PC-9 (cell line): ENCODE measurements at regions of chr16 and their contacts with region 1.

Region 1: DNA sequence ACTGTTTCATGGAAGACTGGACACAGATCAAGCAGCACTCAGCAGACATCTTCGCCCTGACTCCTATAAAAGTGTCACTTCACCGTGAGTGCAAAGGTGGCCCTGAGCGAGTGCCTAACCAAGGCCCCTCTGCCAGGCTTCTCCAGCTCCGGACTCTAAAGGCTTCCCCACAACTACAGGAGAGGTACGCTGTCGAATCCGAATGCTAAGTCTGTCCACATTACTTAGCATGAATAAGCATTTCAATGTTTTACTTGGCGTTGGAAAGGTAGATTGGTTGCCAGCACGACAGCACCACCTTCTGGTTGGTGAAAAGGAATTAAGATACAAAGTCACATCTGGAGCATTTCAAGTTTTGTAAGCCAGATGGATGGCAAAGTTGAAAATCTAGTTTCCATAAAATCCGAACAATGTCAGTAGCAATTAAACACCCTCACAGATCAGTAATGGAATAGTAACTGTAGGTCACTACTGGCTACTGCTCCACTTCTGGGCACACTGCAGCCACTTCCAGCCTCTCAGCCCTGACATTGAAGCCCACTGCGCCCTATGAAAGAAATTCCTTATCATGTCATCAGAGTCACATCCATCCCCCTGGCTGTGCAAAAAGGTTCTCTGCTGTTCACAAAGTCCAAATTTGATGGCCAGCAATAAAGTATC is 100.9 kb downstream of the PARN start:
- DNase-seq: peak; percentile 86
- H3K4me3 ChIP-seq: no peak overlapping the region
- H3K27ac ChIP-seq: peak overlapping the region; percentile 70
- H3K4me1 ChIP-seq: peaks cover 31% of the 10 kb centered on the region
- H3K27me3 ChIP-seq: no peaks in the 10 kb centered on the region
- CTCF ChIP-seq: peak; percentile 87

Region 2: GRCh38 chr16:14249291-14250032 is 279.7 kb before region 1 on chr16:
- CTCF ChIA-PET with region 1: no interaction called
- POLR2A ChIA-PET with region 1: no interaction called
- intact Hi-C with region 1: loop called (anchors 1 kb)
- DNase-seq: peak in 1 of 2 experiments; percentile 55
- H3K4me3 ChIP-seq: no peak overlapping the region
- H3K27ac ChIP-seq: no peak overlapping the region
- H3K4me1 ChIP-seq: no peaks in the 10 kb centered on the region
- H3K27me3 ChIP-seq: no peaks in the 10 kb centered on the region
- CTCF ChIP-seq: peak; percentile 88

Region 3: DNA sequence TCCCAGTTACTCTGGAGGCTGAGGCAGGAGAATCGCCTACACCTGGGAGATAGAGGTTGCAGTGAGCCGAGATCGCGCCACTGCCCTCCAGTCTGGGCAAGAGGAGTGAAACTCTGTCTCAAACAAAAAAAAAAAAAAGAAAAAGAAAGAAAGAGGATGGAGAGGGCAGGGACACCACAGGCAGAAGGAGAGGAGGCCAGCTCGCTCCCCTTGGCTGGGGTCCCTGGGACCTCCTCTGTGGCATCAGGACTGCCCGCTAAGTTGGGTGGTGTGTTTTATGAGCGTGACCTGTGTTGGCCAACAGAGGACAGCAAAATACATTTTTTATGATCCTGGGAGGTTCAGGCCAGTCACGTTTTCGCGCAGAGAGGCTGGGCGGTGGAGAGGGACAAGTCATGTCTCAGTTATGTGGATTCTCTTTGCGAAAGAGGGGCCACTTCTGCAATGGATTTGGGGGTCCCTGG is 228.4 kb before region 1 on chr16:
- CTCF ChIA-PET with region 1: interaction called, 3 read pairs
- POLR2A ChIA-PET with region 1: no interaction called
- intact Hi-C with region 1: loop called (anchors 1 kb)
- DNase-seq: peak; percentile 83 to 84
- H3K4me3 ChIP-seq: peak overlapping the region; percentile 73; the same call in 1 of the 2 replicates
- H3K27ac ChIP-seq: peak overlapping the region; percentile 83
- H3K4me1 ChIP-seq: peaks cover 8% of the 10 kb centered on the region
- H3K27me3 ChIP-seq: no peaks in the 10 kb centered on the region
- CTCF ChIP-seq: peak; percentile 68

Region 4: DNA sequence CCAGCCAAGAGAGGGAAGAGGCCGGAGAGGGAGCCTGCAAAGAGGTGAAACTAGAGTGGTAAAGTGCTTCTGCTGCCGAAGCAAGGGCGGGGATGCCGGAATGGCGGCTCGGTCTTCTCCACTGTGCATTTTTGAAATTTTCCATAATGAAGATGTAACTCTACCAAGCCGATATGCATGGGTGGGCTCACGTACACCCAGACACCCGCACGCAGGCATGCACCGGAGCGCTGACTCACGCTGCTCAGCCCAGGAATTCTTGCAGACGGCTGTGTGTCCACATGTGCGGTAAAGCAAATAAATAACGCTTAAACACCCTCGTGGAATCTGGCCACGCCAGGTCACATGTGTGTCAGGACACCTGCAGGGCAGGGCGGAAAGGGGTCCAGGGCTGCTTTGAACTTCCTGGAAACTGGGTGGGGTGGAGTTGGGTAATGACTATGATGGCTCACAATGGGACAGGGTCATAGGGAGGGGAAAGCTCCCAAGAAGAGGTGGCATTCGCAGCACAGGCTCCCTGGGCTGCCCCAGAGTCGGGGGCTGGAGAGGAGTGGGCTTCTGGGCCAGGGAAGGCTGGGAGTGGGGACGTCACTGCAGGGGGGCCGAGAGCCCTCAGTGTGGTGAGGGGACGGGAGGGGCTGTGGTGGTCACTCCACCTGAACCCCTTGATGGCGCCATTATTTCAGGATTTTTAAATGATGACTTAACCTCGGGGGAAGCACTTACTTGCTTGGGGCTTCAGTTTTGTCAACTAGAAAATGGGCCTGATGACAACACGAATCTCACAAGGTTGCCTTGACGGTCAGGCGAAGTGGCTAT is 164.5 kb before region 1 on chr16:
- CTCF ChIA-PET with region 1: interaction called, 3 read pairs
- POLR2A ChIA-PET with region 1: interaction called, 11 read pairs
- intact Hi-C with region 1: loop called (anchors 1 kb)
- DNase-seq: peak; percentile 98 to 99
- H3K4me3 ChIP-seq: peak overlapping the region; percentile 49; the same call in 1 of the 2 replicates
- H3K27ac ChIP-seq: peak overlapping the region; percentile 98
- H3K4me1 ChIP-seq: peaks cover 32% of the 10 kb centered on the region
- H3K27me3 ChIP-seq: no peaks in the 10 kb centered on the region
- CTCF ChIP-seq: no peak

Region 5: DNA sequence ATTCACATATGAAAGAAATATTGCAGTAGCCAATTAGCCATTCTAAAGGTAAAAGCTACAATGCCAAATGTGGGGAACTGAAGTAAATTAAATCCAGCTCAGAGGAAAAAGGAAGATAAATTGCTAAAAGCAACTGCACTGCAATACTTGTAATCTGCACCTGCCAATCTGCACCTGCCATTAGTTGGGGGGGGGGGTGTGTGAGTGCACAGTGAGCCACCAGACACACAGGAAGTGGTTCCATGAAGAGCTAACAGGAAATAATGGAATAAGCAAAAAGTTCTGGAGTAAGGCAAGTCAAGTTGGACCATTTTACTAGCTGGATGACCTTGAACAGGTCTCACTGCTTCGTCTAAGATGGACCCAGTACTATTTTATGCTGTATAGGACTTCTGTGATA is 90.9 kb before region 1 on chr16:
- CTCF ChIA-PET with region 1: interaction called, 12 read pairs
- POLR2A ChIA-PET with region 1: no interaction called
- intact Hi-C with region 1: no loop called
- DNase-seq: no peak
- H3K4me3 ChIP-seq: no peak overlapping the region
- H3K27ac ChIP-seq: no peak overlapping the region
- H3K4me1 ChIP-seq: no peaks in the 10 kb centered on the region
- H3K27me3 ChIP-seq: no peaks in the 10 kb centered on the region
- CTCF ChIP-seq: no peak

Region 6: DNA sequence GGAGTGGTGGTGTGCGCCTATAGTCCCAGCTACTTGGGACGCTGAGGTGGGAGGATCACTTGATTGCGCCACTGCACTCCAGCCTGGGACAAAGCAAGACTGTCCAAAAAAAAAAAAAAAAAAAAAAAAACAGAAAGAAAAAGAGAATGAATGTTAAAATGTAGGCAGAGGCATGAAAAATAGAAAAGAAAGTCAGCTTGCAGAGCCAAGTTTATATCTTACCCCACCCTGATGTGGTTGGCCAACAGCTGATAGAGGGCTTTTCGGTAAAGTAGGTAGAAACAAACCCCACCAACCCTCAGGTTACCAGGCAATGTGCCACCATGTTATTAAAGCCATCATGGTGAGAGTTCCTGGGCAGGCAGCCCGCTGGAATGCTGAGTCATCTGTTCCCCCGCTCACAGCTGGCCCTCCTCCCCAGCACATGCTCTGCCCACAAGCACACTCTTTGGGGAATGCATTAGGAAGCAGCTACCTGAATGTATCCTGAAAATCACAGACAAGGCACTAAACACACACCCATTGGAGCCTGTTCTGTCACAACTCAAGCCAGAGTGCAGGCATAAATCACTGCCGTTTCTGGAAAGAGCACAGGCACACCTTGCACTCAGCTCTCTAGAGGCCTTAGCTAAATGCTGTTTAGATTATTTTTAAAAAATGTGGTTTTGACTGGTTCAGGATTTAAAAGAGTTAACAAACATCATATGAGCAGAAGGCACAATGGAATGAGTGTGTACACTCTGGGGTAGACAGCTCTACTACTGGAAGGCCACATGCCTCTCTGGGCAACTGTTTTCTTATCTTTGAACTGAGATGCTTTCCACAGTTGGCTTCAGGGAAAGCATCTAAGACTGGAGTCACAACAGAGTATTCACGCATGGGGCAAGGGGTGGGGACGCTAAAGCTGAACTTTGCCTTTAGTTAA is 27.5 kb before region 1 on chr16:
- CTCF ChIA-PET with region 1: interaction called, 3 read pairs
- POLR2A ChIA-PET with region 1: no interaction called
- intact Hi-C with region 1: loop called (anchors 2 kb)
- DNase-seq: peak; percentile 94
- H3K4me3 ChIP-seq: no peak overlapping the region
- H3K27ac ChIP-seq: peak overlapping the region; percentile 98
- H3K4me1 ChIP-seq: peaks cover 98% of the 10 kb centered on the region
- H3K27me3 ChIP-seq: no peaks in the 10 kb centered on the region
- CTCF ChIP-seq: no peak